Ascending aorta (tissue), 2 donors: ENCODE measurements at regions of chr2 and their contacts with region 1.

Region 1: DNA sequence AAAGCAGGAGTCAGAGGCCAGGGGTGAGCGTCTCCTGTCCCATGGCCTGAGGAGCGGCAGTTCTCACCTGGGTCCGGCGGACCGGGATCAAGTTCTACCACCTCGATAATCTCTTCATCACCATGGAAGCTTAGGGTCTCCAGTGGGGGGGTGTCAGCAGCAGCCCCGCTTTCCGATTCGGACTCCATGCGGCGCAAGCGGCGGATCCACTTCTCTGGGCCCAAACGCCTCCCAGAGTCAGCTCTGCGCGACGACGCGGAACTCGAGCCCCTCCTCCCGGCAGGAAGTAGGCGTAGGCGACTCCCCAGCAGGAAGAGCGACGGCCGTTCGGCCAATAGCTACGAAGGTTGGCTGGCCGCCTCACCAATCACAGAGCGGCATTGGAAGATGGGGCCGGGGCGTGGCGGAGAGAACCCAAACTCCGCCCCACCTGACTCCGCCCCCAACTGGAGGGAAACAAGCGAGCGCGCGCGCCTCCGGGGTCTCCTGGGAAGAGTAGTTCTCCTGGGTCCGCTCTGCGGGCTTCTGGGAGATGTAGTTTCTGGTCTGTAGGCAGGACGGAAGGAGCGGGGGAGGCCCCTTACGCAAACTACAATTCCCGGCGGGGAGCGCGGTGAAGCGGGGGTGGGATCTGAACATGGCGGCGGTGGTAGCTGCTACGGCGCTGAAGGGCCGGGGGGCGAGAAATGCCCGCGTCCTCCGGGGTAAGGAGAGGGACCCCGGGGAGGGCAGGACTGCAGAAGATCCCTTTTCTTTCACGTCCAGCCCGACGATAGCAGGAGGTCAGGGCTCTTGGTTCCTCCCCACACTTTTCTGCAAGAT is at the starts of genes AAMP and PNKD:
- DNase-seq: peak; percentile 99 to 100
- H3K4me3 ChIP-seq: peak within 1 kb of the TSS; percentile 79 to 85
- H3K27ac ChIP-seq: peak within 1 kb of the TSS; percentile 73 to 80
- H3K4me1 ChIP-seq: peaks cover 12 to 35% of the 10 kb centered on the region in 2 donors
- H3K27me3 ChIP-seq: no peaks in the 10 kb centered on the region
- CTCF ChIP-seq: peak in 1 of 3 experiments; percentile 44
- total RNA-seq, gene AAMP: 73.7 TPM
- total RNA-seq, gene PNKD: 45.8 TPM

Region 2: DNA sequence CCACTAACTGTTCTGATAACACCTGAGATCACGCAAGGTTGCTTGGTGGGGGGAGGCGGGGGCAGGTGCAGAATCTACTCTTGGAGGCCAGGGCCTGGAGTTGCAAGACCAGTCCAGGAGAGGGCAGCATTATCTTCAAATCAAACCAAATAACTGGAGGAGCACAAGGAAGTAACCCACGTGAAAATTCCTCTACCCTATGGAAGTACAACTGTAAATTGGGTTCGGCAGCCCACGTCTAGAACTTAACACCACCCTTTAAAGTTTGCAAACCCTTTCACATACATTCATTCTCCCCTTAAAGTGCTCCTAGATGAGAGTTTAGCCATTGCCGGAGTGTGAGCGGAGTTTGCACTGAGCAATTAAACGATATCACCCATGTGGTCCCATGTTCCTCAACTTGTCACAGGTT is 83.7 kb before region 1 on chr2:
- intact Hi-C with region 1: loop called (anchors 2 kb)
- DNase-seq: peak in 1 of 2 donors; percentile 81
- H3K4me3 ChIP-seq: no peak overlapping the region
- H3K27ac ChIP-seq: no peak overlapping the region
- H3K4me1 ChIP-seq: peaks cover 0 to 6% of the 10 kb centered on the region in 2 donors
- H3K27me3 ChIP-seq: no peaks in the 10 kb centered on the region
- CTCF ChIP-seq: peak; percentile 69 to 89 (median 83)

Region 3: DNA sequence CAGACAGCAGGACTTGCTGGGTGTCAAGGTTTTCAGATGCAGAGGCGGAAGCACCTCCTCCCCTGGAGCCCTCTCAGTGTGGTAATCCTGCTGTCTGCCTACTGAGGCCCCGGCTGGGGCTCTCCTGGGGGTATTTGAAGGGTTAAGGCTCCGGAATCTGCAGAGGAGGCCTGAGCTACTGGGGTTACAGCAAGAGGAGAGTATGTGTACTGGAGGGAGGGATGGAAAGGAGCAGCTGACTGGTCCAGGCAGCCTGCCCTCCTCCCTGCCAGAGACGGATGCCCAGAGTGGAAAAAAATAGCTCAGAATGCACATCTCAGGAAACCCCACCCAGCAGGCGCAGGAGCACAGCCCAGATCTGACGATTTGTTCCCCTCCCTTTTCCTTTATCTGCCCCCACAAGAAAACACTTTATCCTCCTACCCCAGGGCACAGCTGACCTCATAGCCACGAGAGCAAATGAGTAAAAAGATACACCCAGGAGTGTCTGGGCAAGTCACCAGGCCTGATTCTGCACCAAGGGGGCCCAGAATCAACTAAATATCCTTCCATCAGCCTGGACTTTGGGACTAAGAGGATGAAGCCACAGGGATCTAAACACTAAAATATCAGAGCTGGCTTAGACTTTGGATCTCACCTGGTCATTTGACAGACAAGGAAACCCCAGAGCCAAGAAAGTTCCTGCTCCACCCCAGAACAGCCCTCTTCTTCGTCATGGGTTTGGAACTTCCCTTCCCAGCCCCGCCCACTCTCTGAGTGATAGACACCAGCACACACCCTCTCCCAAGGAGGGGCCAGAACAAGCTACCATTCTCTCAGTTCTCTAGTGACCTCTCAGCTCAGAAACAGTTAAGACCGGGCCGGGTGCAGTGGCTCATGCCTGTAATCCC is 16.7 kb after region 1 on chr2:
- intact Hi-C with region 1: loop called (anchors 1 kb)
- DNase-seq: peak; percentile 91 to 97
- H3K4me3 ChIP-seq: peak overlapping the region; percentile 48 to 68
- H3K27ac ChIP-seq: peak overlapping the region; percentile 98 to 99
- H3K4me1 ChIP-seq: peaks cover 44 to 70% of the 10 kb centered on the region in 2 donors
- H3K27me3 ChIP-seq: no peaks in the 10 kb centered on the region
- CTCF ChIP-seq: no peak

Region 4: GRCh38 chr2:218360447-218360846 is 90.3 kb after region 1 on chr2:
- intact Hi-C with region 1: loop called (anchors 1 kb)
- DNase-seq: no peak
- H3K4me3 ChIP-seq: no peak overlapping the region
- H3K27ac ChIP-seq: no peak overlapping the region
- H3K4me1 ChIP-seq: peaks cover 3 to 7% of the 10 kb centered on the region in 2 donors
- H3K27me3 ChIP-seq: no peaks in the 10 kb centered on the region
- CTCF ChIP-seq: no peak

Region 5: DNA sequence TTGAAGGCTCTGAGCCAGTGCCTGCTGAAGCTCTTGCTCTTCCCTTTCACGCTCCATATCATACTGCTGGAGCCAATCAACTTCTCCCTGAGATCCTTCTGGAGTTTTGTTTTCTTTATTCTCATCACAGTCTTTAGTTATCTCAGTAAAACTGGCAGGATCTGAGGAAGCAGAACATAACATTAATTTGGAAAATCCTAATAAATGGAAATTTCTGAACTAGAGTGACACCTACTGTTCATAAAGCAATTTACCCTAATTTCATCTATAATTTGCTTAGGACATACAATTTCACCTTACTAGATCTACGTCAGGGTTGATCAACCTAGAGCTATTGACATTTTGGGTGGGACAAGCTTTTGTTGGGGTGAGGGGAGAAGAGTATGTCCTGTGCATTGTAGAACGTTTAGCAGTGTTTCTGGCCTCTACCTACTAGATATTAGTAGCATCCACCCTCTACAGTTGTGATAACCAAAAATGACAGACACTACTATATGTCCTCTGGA is 196.0 kb after region 1 on chr2:
- intact Hi-C with region 1: loop called (anchors 5 kb)
- DNase-seq: no peak
- H3K4me3 ChIP-seq: no peak overlapping the region
- H3K27ac ChIP-seq: no peak overlapping the region
- H3K4me1 ChIP-seq: no peaks in the 10 kb centered on the region
- H3K27me3 ChIP-seq: no peaks in the 10 kb centered on the region
- CTCF ChIP-seq: peak; percentile 29 to 59 (median 38)

Region 6: GRCh38 chr2:219029829-219030165 is 759.7 kb after region 1 on chr2:
- intact Hi-C with region 1: no loop called
- DNase-seq: peak in 1 of 2 donors; percentile 84
- H3K4me3 ChIP-seq: no peak overlapping the region
- H3K27ac ChIP-seq: no peak overlapping the region
- H3K4me1 ChIP-seq: no peaks in the 10 kb centered on the region
- H3K27me3 ChIP-seq: no peaks in the 10 kb centered on the region
- CTCF ChIP-seq: peak; percentile 85 to 96 (median 96)